Mammary epithelial cell (primary cell): ENCODE measurements at regions of chr17 and their contacts with region 1.

Region 1: GRCh38 chr17:43701318-43701743 is 39.6 kb upstream of the MEOX1 start:
- DNase-seq: peak; percentile 91
- H3K4me3 ChIP-seq: no peak overlapping the region
- H3K27ac ChIP-seq: no peak overlapping the region
- H3K4me1 ChIP-seq: peaks cover 10% of the 10 kb centered on the region
- H3K27me3 ChIP-seq: no peaks in the 10 kb centered on the region
- CTCF ChIP-seq: no peak

Region 2: GRCh38 chr17:43367737-43368242 is 333.5 kb before region 1 on chr17:
- CTCF ChIA-PET with region 1: no interaction called
- dilution Hi-C with region 1: loop called (anchors 10 kb)
- in situ Hi-C with region 1: no loop called
- intact Hi-C with region 1: no loop called
- DNase-seq: peak; percentile 99
- H3K4me3 ChIP-seq: no peak overlapping the region
- H3K27ac ChIP-seq: peak overlapping the region; percentile 99
- H3K4me1 ChIP-seq: peaks cover 21% of the 10 kb centered on the region
- H3K27me3 ChIP-seq: no peaks in the 10 kb centered on the region
- CTCF ChIP-seq: no peak

Region 3: DNA sequence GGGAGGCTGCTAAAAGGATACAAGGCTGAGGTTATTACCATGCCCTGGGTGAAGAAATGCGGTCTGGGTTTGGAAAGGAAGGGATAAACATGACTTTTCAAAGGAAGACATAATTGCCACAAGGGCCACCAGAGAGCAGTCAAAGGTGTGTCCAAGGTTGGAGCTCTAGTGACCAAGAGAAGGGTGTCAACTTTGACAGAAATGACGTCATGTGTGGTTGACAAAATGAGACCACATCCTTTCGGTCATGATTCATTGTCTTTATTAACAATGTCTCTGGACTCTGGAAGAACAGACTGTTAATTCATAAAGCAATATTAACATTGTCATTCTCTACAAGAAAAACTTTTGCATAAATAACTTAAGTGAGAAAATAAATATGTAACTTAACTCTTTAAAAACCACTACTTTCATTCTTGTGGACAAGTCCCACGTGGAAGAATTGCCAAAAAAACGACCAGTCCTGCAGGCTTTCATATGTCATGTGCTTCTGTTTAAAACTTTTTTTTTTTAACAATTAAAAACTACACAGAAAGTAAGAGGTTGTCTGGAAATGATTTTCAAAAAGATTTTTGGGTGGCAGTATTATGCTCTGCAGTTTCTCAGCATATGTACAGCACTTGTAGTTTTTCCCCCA is 52.3 kb after region 1 on chr17:
- CTCF ChIA-PET with region 1: no interaction called
- dilution Hi-C with region 1: loop called (anchors 5 kb)
- in situ Hi-C with region 1: no loop called
- intact Hi-C with region 1: no loop called
- DNase-seq: peak; percentile 82
- H3K4me3 ChIP-seq: no peak overlapping the region
- H3K27ac ChIP-seq: no peak overlapping the region
- H3K4me1 ChIP-seq: peaks cover 32% of the 10 kb centered on the region
- H3K27me3 ChIP-seq: no peaks in the 10 kb centered on the region
- CTCF ChIP-seq: no peak

Region 4: GRCh38 chr17:43840814-43841213 is 139.5 kb after region 1 on chr17:
- CTCF ChIA-PET with region 1: no interaction called
- dilution Hi-C with region 1: loop called (anchors 5 kb)
- in situ Hi-C with region 1: no loop called
- intact Hi-C with region 1: loop called (anchors 10 kb)
- DNase-seq: no peak
- H3K4me3 ChIP-seq: no peak overlapping the region
- H3K27ac ChIP-seq: no peak overlapping the region
- H3K4me1 ChIP-seq: peaks cover 31% of the 10 kb centered on the region
- H3K27me3 ChIP-seq: no peaks in the 10 kb centered on the region
- CTCF ChIP-seq: no peak